ENCODE measurements at regions of chr6 and their contacts with region 1.

Region 1: GRCh38 chr6:137866914-137867684 is at the start of gene TNFAIP3:
- DNase-seq: peak; percentile 97
- H3K4me3 Mint-ChIP-seq: peak within 1 kb of the TSS; percentile 89
- H3K27ac Mint-ChIP-seq: peak within 1 kb of the TSS; percentile 99
- H3K4me1 Mint-ChIP-seq: peaks cover 32% of the 10 kb centered on the region
- H3K27me3 Mint-ChIP-seq: no peaks in the 10 kb centered on the region
- total RNA-seq, gene TNFAIP3: 289 to 294 TPM

Region 2: DNA sequence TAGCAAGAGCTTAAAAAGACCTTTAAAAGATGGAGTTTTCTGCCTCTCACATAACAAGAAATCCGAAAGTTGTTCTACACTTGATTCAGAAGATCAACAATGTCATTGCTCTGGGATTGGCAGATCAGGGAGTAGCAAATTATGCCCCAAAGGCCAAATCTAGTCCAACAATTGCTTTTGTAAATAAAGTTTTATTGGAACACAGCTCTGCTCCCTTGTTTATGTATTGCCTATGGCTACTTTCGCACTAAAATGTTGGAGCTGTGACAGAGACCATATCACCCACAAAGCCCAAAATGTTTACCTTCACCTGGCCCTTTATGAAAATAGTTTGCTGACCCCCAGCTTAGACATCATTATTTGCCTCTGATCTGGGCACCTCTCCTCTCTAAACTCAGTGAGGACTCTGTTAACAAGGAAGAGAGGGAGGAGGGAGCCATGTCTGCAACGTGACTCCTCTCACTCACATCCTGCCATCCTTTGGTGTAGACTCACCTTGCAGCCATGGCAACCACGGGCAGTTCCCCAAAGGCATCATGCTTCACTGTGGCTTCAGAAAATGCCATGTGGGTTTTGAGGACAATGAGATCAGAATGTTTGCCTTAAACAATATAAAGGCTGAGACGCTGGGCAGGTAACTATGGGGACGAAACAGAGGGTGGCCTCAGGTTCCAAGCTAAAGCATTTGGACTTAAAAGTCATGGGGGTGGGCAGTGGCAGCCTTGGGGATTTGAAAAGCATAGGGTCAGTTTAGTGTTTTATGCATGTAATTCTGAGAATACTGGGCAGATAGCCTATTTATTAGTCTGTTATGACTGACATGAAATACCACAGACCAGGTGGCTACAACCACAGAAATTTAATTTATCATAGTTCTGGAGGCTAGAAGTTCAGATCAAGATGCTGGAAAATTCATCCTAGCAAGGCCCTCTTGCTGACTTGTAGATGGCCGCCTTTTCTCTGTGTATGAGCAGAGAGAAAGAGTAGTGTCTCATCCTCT is 149.7 kb before region 1 on chr6:
- CTCF ChIA-PET with region 1: interaction called, 10 read pairs
- intact Hi-C with region 1: no loop called
- DNase-seq: peak; percentile 89
- H3K4me3 Mint-ChIP-seq: no peak overlapping the region
- H3K27ac Mint-ChIP-seq: peak overlapping the region; percentile 44
- H3K4me1 Mint-ChIP-seq: peaks cover 36% of the 10 kb centered on the region
- H3K27me3 Mint-ChIP-seq: no peaks in the 10 kb centered on the region

Region 3: DNA sequence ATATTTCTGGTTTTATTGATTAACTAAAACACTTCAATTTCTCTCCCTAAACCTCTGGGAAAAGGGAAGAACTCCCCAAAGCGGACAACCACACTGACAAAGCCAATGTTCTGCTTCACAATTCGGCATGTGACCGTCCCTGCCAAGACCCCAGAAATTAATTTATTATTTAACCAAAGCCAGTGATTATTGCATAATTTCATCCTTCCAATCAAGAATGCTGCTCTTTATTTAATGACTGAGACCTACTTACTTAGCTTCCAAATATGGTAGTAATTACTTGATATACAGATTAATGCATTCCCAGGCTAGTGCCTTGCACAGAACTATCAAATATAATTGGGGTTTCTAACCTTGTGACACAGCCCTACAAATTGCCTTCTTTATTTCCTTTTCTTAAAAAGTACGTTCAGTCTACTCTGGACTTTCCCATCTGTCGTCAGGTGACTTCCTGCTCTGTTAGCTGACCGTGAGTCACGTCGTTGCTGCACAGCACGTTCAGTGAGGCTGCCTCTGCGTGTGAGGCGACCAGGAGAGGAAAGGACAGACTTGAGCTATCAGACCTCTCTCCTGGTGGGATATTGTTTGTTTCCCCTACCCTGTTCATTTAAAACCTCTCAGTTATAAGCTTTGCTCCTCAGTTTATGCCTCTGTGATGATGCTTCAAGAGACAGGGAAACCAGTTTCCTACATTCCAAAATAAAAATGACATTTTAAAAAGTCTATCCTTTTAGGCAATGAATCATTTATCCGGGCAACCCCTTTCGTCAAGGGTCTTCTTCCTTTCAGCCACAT is 55.8 kb before region 1 on chr6:
- CTCF ChIA-PET with region 1: interaction called, 6 read pairs
- intact Hi-C with region 1: loop called (anchors 1 kb)
- DNase-seq: peak; percentile 93
- H3K4me3 Mint-ChIP-seq: peak overlapping the region; percentile 52
- H3K27ac Mint-ChIP-seq: peak overlapping the region; percentile 94
- H3K4me1 Mint-ChIP-seq: peaks cover 75% of the 10 kb centered on the region
- H3K27me3 Mint-ChIP-seq: no peaks in the 10 kb centered on the region

Region 4: DNA sequence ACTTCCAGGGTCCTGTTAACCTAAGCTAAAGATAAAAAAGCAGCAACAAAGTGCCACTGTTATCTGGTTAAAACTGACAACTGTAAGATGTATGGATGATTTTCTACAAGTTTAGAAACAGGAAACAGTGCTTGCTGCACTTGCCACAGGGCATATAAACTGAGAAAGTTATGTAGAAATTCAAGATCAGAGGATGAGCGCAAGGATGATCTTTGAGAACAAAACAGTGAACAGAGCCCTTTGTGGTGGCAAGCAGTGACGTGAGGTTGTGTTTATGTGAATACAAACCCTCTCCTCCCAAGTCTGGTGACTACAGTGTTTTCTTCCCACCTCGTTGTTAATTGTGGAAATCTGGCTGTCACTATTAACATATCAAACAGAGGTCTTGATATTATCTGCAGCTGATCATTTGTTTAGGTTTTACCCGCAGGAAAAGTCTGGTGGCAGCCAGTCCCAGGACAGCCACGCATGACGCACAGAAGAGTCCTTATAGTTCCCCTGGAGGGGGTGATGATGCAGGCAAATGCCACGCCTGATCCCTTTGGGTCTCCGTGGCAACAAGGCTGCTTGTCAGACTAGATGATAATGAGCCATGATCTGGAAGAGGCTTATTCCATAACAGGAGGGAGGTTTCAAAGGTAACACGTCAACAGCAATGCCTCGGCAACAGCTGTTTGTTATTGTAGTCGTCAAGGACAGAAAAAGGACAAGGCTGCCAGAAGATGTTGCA is 43.1 kb before region 1 on chr6:
- CTCF ChIA-PET with region 1: interaction called, 23 read pairs
- intact Hi-C with region 1: loop called (anchors 1 kb)
- DNase-seq: peak; percentile 84
- H3K4me3 Mint-ChIP-seq: peak overlapping the region; percentile 67
- H3K27ac Mint-ChIP-seq: peak overlapping the region; percentile 95
- H3K4me1 Mint-ChIP-seq: peaks cover 81% of the 10 kb centered on the region
- H3K27me3 Mint-ChIP-seq: no peaks in the 10 kb centered on the region

Region 5: DNA sequence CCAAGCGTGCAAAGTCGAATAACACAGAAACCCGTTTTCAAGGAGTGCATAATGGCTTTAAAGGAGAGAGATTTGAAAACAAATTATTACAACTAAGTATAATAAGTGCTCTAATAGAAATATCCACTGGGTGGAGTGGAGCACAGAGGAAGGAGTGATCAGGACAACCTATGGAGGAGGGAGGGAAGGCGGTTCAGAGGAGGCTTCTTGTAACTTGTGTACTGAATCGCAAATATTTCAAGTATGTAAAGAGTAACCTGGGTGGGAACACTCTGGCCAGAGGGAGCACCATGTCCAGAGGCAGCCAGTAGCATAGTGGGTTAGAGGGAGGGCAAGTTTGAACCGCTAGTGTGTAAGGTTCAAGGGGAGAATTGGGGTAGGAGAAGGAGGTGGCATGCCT is 21.6 kb before region 1 on chr6:
- CTCF ChIA-PET with region 1: interaction called, 5 read pairs
- intact Hi-C with region 1: loop called (anchors 1 kb)
- DNase-seq: no peak
- H3K4me3 Mint-ChIP-seq: no peak overlapping the region
- H3K27ac Mint-ChIP-seq: no peak overlapping the region
- H3K4me1 Mint-ChIP-seq: peaks cover 13% of the 10 kb centered on the region
- H3K27me3 Mint-ChIP-seq: no peaks in the 10 kb centered on the region

Region 6: GRCh38 chr6:137878486-137879285 is 11.6 kb after region 1 on chr6:
- CTCF ChIA-PET with region 1: interaction called, 73 read pairs
- intact Hi-C with region 1: no loop called
- DNase-seq: no peak
- H3K4me3 Mint-ChIP-seq: peak overlapping the region; percentile 65
- H3K27ac Mint-ChIP-seq: peak overlapping the region; percentile 99
- H3K4me1 Mint-ChIP-seq: peaks cover 82% of the 10 kb centered on the region
- H3K27me3 Mint-ChIP-seq: no peaks in the 10 kb centered on the region

Region 7: GRCh38 chr6:137911675-137912191 is 44.6 kb after region 1 on chr6:
- CTCF ChIA-PET with region 1: no interaction called
- intact Hi-C with region 1: no loop called
- DNase-seq: no peak
- H3K4me3 Mint-ChIP-seq: no peak overlapping the region
- H3K27ac Mint-ChIP-seq: no peak overlapping the region
- H3K4me1 Mint-ChIP-seq: peaks cover 49% of the 10 kb centered on the region
- H3K27me3 Mint-ChIP-seq: no peaks in the 10 kb centered on the region